ENCODE measurements at regions of chr16 and their contacts with region 1.

Region 1: DNA sequence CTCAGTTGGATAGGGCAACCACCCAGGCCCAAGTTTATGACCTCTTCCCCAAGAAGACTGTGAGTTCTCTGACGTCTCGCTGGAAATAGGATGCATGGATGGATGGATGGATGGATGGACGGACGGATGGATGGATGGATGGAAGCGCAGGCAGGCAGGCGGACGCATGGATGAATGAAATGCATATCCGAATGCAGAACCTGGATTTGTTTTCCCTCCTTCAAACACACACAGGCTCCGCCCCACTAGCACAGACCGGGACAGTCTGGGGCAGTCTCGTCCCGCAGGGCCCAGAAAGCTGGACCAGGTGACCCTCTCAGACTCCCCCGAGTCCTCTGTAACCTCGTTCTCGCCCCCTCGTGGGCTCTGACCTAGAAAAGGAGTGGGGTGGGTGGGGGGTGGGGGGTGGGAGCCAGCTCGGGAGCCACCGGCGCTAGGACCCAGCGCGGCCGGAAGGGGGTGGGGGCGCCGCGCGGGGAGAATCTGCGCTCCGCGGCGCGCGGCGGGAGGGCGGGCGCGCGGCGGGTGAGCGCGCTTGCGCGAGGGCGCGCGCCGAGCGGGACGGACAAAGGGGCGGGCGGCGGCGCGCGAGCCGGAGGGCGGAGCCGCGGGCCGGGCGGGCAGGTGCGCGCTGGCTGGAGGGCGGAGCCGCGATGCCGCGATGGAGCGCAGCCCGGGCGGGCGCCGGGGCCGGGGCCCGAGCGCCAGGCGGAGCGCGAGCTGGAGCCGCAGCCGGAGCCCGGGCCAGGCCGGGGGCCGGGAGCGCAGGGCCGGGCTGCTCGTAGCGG is at the start of gene SBK1:
- DNase-seq: peak; percentile 28 to 56
- ATAC-seq: peak; percentile 82 to 86
- H3K4me3 ChIP-seq: peak within 1 kb of the TSS; percentile 59 to 72 (median 63)
- H3K27ac ChIP-seq: peak within 1 kb of the TSS; percentile 76 to 83 (median 81)
- H3K4me1 ChIP-seq: peaks cover 39 to 46% of the 10 kb centered on the region in 2 donors
- H3K27me3 ChIP-seq: no peaks in the 10 kb centered on the region
- CTCF ChIP-seq: no peak
- POLR2A ChIP-seq: peak in 1 of 2 donors; percentile 41
- total RNA-seq, gene SBK1: 1.8 to 6.4 (median 4.5) TPM

Region 2: GRCh38 chr16:28258567-28258966 is 33.5 kb before region 1 on chr16:
- in situ Hi-C with region 1: no loop called
- intact Hi-C with region 1: loop called (anchors 2 kb)
- DNase-seq: peak; percentile 77 to 96
- ATAC-seq: peak; percentile 69 to 80
- H3K4me3 ChIP-seq: peak overlapping the region; percentile 58 to 68 (median 61)
- H3K27ac ChIP-seq: peak overlapping the region; percentile 93 to 98 (median 96)
- H3K4me1 ChIP-seq: peaks cover 35 to 42% of the 10 kb centered on the region in 2 donors
- H3K27me3 ChIP-seq: no peaks in the 10 kb centered on the region
- CTCF ChIP-seq: no peak
- POLR2A ChIP-seq: peak; percentile 85 to 90

Region 3: DNA sequence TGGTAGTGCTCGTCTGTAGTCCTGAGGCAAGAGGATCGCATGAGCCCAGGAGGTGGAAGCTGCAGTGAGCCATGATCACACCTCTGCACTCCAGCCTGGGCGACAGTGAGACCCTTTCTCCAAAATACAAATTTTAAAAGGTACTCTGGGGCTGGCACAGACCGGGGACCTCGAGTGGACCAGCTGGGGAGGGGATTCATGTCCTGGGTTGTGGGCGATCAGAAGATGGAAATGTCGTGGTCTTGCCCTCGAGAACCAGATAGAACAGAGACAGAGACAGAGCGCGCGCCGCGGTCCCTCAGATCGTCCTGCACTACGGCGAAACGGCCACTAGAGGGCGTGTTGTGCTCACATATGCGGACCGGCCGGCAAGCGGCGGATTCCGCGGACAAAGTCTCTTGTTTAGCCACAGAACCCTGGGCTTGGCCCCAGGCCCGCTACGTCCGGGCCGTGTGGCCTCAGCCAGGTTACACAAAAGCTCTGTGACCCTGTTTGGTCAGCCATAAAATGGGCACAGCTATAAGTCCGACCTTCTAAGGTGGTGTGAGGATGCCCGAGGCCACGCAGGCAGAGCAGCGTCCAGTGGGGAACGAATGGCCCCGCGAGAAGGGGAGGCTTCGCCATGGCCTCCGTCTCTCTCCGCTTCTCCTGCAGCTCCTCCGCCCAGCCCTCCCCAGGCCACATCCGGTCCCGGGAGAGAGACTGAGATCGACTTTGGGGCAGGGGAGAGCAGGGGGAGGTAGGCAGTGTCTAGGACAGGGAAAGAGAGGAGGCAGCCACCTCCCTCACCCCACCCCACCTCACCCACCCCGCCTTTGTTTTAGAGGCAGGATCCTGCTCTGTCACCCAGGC is 14.3 kb before region 1 on chr16:
- in situ Hi-C with region 1: no loop called
- intact Hi-C with region 1: no loop called
- DNase-seq: peak; percentile 59 to 77
- ATAC-seq: peak; percentile 88 to 90
- H3K4me3 ChIP-seq: peak overlapping the region; percentile 46 to 64 (median 56)
- H3K27ac ChIP-seq: peak overlapping the region; percentile 55 to 71 (median 60)
- H3K4me1 ChIP-seq: peaks cover 0 to 9% of the 10 kb centered on the region in 2 donors
- H3K27me3 ChIP-seq: no peaks in the 10 kb centered on the region
- CTCF ChIP-seq: peak; percentile 92 to 98 (median 96)
- POLR2A ChIP-seq: no peak

Region 4: GRCh38 chr16:28964072-28964471 is 672.0 kb after region 1 on chr16:
- in situ Hi-C with region 1: no loop called
- intact Hi-C with region 1: no loop called
- DNase-seq: no peak
- ATAC-seq: no peak
- H3K4me3 ChIP-seq: no peak overlapping the region
- H3K27ac ChIP-seq: no peak overlapping the region
- H3K4me1 ChIP-seq: no peaks in the 10 kb centered on the region
- H3K27me3 ChIP-seq: no peaks in the 10 kb centered on the region
- CTCF ChIP-seq: no peak
- POLR2A ChIP-seq: no peak